Calu3 (cell line): ENCODE measurements at regions of chr3 and their contacts with region 1.

Region 1: DNA sequence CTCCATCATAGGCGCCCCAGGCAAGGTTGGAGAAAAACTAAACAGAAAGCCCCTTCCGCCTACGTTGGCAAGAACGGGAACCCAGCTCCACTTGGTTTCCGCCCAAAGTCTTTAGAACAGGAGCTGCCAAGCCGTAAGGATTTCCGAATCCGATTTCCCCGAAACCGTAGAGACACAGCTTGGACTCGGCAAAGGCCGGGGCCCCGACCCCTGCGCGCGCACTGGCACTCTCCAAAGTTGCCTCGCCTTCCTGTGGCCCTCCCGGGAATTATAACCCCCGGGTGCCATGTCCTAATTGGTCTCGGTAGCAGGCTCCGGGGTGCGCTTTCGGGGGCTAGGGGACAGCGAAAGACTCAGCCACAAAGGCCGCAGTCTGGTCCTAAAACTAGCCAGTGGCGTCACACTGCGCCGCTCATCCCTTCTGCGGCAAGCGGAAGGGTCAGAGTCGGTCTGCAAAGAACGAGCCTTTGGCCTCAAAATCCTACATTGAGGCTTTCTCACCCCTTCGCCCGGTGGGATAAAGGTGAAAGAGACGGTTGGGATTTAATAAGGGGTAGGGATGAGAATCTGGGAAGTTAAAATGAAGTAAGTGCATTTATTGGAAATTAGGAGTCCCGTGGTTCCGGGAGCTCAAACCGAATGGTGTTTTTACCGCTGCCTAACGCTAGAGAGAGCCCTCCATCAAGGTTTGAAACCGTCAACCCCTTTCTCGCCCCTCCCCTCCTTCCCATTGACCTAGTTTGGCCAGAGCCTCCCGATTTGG is 6.8 kb downstream of the BCL6 start:
- DNase-seq: peak; percentile 94
- H3K4me3 Mint-ChIP-seq: peak overlapping the region; percentile 83
- H3K27ac Mint-ChIP-seq: peak overlapping the region; percentile 59
- H3K4me1 Mint-ChIP-seq: peaks cover 42% of the 10 kb centered on the region
- H3K27me3 Mint-ChIP-seq: peaks cover 9% of the 10 kb centered on the region
- CTCF ChIP-seq: peak; percentile 96

Region 2: GRCh38 chr3:187651282-187651681 is 87.2 kb before region 1 on chr3:
- CTCF ChIA-PET with region 1: no interaction called
- intact Hi-C with region 1: no loop called
- DNase-seq: no peak
- H3K4me3 Mint-ChIP-seq: no peak overlapping the region
- H3K27ac Mint-ChIP-seq: no peak overlapping the region
- H3K4me1 Mint-ChIP-seq: no peaks in the 10 kb centered on the region
- H3K27me3 Mint-ChIP-seq: peaks cover 85% of the 10 kb centered on the region
- CTCF ChIP-seq: no peak

Region 3: DNA sequence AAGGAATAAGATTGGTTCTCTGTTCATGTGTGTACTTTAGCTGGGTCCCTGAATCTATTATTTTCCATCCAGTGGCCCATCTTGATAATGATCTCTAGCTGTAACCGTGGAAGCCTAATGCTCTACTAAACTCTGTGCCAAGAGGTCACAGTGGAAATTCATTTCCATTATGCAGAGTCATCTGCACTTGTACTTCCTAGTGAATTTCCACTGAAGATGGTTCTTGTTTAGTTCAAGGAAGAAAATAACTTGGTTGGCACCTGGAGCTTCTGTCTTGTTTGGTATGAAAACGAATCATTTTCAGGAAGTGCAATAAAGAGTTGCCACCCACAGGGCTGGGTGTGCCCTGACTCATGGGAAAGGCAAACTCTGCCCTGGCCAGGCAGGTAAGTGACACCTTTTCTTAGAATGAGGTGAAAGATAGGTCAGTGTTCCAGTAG is 425.8 kb after region 1 on chr3:
- CTCF ChIA-PET with region 1: interaction called, 11 read pairs
- intact Hi-C with region 1: no loop called
- DNase-seq: peak; percentile 90
- H3K4me3 Mint-ChIP-seq: peak overlapping the region; percentile 54
- H3K27ac Mint-ChIP-seq: peak overlapping the region; percentile 87
- H3K4me1 Mint-ChIP-seq: peaks cover 76% of the 10 kb centered on the region
- H3K27me3 Mint-ChIP-seq: no peaks in the 10 kb centered on the region
- CTCF ChIP-seq: no peak

Region 4: DNA sequence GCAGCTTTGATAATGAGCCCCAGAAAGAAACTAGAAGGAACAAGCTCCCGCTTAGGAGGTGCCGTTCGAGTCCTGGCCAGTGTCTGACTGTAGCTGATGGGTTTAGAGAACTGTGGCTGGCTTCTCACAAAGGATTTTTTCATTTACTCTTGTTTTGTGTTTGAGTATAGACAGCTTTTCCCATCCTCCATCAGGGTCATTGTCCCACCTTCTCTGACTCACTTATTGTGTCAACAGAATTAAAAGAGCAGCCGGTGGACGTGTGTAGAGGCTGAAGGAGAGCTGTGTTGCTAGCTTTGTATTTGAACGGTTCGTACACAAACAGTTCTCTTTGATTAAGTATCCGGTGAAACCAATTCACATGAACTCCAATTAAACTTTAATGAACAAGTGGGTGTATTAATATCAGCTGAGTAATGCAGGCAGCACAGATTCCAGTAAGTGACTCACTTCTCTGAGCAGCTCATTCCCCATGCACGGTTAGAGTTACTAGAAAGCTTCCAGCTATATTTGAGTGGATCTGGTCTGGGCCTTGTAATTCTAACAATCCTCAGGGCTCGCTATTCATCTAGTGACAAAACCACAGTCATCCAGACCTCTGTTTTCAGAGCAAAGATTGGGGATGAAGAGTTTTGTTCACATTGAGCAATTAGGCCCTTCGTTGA is 556.4 kb after region 1 on chr3:
- CTCF ChIA-PET with region 1: interaction called, 21 read pairs
- intact Hi-C with region 1: no loop called
- DNase-seq: peak; percentile 82
- H3K4me3 Mint-ChIP-seq: peak overlapping the region; percentile 11
- H3K27ac Mint-ChIP-seq: peak overlapping the region; percentile 81
- H3K4me1 Mint-ChIP-seq: peaks cover 93% of the 10 kb centered on the region
- H3K27me3 Mint-ChIP-seq: no peaks in the 10 kb centered on the region
- CTCF ChIP-seq: no peak

Region 5: DNA sequence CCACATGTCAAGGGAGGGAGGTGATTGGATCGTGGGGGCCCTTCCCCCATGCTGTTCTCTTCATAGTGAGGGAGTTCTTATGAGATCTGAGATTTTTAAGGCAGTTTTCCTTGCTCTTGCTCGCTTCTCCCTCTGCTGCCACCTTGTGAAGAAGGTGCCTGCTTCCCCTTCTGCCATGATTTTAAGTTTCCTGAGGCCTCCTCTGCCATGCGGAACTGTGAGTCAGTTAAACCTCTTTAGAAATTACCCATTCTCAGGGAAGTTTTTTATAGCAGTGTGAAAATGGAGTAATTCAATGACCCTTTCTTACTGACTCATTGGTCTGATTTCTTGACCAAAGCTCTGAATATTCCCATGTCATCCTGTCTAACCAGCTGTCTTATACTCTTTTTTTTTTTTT is 948.9 kb after region 1 on chr3:
- CTCF ChIA-PET with region 1: no interaction called
- intact Hi-C with region 1: loop called (anchors 5 kb)
- DNase-seq: no peak
- H3K4me3 Mint-ChIP-seq: no peak overlapping the region
- H3K27ac Mint-ChIP-seq: no peak overlapping the region
- H3K4me1 Mint-ChIP-seq: peaks cover 14% of the 10 kb centered on the region
- H3K27me3 Mint-ChIP-seq: no peaks in the 10 kb centered on the region
- CTCF ChIP-seq: no peak

Region 6: GRCh38 chr3:188881954-188882641 is 1143.6 kb after region 1 on chr3:
- CTCF ChIA-PET with region 1: interaction called, 3 read pairs
- intact Hi-C with region 1: loop called (anchors 5 kb)
- DNase-seq: no peak
- H3K4me3 Mint-ChIP-seq: peak overlapping the region; percentile 5
- H3K27ac Mint-ChIP-seq: peak overlapping the region; percentile 79
- H3K4me1 Mint-ChIP-seq: peaks cover 28% of the 10 kb centered on the region
- H3K27me3 Mint-ChIP-seq: no peaks in the 10 kb centered on the region
- CTCF ChIP-seq: no peak

Region 7: DNA sequence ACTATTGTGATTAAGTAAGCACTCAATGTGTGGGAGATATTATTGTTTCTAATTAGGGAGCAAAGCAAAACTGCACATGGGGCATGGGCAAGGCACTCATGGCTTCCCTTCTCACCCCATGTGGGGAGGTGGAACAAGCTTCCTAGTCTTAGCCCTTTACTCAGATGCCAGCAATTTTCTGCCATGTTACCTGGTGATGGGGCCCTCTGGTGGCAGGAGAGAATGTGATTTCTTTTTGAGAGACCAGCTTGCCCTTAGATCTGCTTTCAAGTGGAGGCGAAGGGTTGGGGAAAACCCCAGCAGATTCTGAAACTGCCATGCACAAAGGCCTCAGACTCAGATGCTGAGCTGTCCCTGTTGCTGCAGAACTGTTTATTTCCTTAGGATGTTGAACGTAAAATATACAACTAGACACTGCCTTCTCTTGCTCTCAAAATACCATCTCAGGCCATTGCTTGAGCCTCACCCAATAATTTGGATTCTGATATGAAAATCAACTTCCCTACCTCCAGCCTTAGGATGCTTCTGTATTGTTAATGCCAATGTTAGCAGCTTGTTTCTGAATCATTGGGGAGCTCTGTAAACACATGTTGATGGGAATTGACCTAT is 1303.1 kb after region 1 on chr3:
- CTCF ChIA-PET with region 1: interaction called, 15 read pairs
- intact Hi-C with region 1: loop called (anchors 2 kb)
- DNase-seq: peak; percentile 74
- H3K4me3 Mint-ChIP-seq: no peak overlapping the region
- H3K27ac Mint-ChIP-seq: no peak overlapping the region
- H3K4me1 Mint-ChIP-seq: no peaks in the 10 kb centered on the region
- H3K27me3 Mint-ChIP-seq: peaks cover 11% of the 10 kb centered on the region
- CTCF ChIP-seq: peak; percentile 71